Activated B cell treated with CpG ODN at 0.5 μM for 24 hours (primary cell): ENCODE measurements at regions of chr15 and their contacts with region 1.

Region 1: DNA sequence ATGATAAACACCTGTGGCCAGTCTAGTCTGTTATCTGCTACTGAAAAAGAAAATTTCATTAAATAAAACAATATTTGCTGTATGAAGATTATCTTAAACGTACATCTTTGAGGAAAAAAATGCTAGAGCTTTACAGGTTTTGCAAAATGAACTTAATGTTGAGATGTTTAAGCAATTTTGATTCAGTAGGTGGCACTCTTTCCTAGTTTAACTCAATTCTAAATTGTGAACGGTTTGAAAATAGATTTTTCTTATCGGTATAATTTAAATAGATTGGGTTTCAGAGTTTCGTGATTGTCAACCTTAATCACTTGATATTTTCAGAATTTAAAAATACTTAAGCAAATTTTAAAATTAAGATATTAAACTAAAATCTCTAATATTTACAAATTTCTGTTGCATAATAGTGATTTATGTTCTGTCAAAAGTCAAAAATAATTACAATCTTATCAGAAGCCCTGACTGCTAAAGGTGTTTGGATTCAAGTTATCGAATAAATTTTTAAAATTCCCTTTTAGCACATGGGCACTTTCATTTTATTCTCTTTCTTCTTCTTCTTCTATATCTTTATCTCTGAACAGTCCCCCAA is 7.0 kb upstream of the RNF111 start:
- DNase-seq: no peak
- ATAC-seq: no peak
- H3K4me3 Mint-ChIP-seq: peak overlapping the region; percentile 73
- H3K27ac Mint-ChIP-seq: peak overlapping the region; percentile 96
- H3K4me1 Mint-ChIP-seq: peaks cover 62% of the 10 kb centered on the region
- H3K27me3 Mint-ChIP-seq: no peaks in the 10 kb centered on the region
- CTCF ChIP-seq: no peak

Region 2: GRCh38 chr15:58770857-58771620 is 209.4 kb before region 1 on chr15 and contains the start of gene MINDY2:
- CTCF ChIA-PET with region 1: no interaction called
- POLR2A ChIA-PET with region 1: no interaction called
- intact Hi-C with region 1: loop called (anchors 2 kb)
- DNase-seq: peak; percentile 89
- ATAC-seq: peak; percentile 94
- H3K4me3 Mint-ChIP-seq: peak within 1 kb of the TSS; percentile 93
- H3K27ac Mint-ChIP-seq: peak within 1 kb of the TSS; percentile 96
- H3K4me1 Mint-ChIP-seq: peaks cover 6% of the 10 kb centered on the region
- H3K27me3 Mint-ChIP-seq: no peaks in the 10 kb centered on the region
- CTCF ChIP-seq: no peak
- total RNA-seq, gene MINDY2: 5.8 and 6.2 TPM in 2 replicates

Region 3: GRCh38 chr15:58957101-58957973 is 23.1 kb before region 1 on chr15:
- CTCF ChIA-PET with region 1: interaction called, 15 read pairs
- POLR2A ChIA-PET with region 1: no interaction called
- intact Hi-C with region 1: loop called (anchors 1 kb)
- DNase-seq: peak; percentile 17
- ATAC-seq: peak; percentile 97
- H3K4me3 Mint-ChIP-seq: no peak overlapping the region
- H3K27ac Mint-ChIP-seq: peak overlapping the region; percentile 38
- H3K4me1 Mint-ChIP-seq: peaks cover 5% of the 10 kb centered on the region
- H3K27me3 Mint-ChIP-seq: no peaks in the 10 kb centered on the region
- CTCF ChIP-seq: no peak

Region 4: GRCh38 chr15:59020322-59020721 is 39.9 kb after region 1 on chr15:
- CTCF ChIA-PET with region 1: no interaction called
- POLR2A ChIA-PET with region 1: no interaction called
- intact Hi-C with region 1: no loop called
- DNase-seq: no peak
- ATAC-seq: no peak
- H3K4me3 Mint-ChIP-seq: no peak overlapping the region
- H3K27ac Mint-ChIP-seq: no peak overlapping the region
- H3K4me1 Mint-ChIP-seq: peaks cover 15% of the 10 kb centered on the region
- H3K27me3 Mint-ChIP-seq: no peaks in the 10 kb centered on the region
- CTCF ChIP-seq: no peak

Region 5: DNA sequence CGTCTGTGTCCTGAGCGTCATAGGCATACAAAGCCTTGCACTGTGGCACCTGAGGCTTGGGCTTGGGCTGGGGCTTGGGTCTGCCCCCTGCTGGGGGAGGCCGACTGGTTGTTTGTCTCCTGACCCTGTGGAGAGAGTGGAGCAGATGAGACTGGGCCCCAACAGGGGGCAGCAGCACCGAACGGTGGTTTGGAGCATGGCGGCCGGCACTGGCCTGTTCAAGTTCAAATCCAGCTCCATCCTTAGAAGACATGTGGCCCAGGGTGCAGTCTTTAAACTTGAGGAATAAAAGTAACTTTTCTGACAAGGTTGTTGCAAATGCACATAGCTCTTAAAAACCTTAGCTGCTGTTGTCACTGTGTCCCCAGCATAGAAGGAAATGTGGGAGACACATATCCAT is 157.8 kb after region 1 on chr15:
- CTCF ChIA-PET with region 1: interaction called, 13 read pairs
- POLR2A ChIA-PET with region 1: interaction called, 8 read pairs
- intact Hi-C with region 1: loop called (anchors 1 kb)
- DNase-seq: peak; percentile 51
- ATAC-seq: peak; percentile 96
- H3K4me3 Mint-ChIP-seq: no peak overlapping the region
- H3K27ac Mint-ChIP-seq: peak overlapping the region; percentile 13
- H3K4me1 Mint-ChIP-seq: peaks cover 10% of the 10 kb centered on the region
- H3K27me3 Mint-ChIP-seq: no peaks in the 10 kb centered on the region
- CTCF ChIP-seq: no peak

Region 6: DNA sequence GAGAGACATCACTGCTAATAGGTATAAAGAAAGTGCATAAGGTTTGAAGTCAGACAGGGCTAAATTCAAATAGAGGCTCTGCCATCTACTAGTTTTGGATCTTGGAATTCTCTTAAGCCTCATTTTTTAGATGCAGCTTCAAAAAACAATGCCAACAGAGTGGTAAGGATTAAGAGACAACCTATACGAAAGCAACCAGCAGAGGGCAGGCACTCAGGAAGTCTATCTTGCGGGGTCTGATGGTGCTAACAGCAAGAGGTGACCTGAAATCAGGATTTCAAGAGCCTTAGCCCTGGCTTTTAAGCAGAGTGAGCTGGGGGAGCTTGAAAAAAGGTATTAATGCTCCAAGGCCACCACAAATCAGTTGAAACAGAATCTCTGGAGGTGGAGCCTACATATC is 266.9 kb after region 1 on chr15:
- CTCF ChIA-PET with region 1: no interaction called
- POLR2A ChIA-PET with region 1: no interaction called
- intact Hi-C with region 1: loop called (anchors 5 kb)
- DNase-seq: no peak
- ATAC-seq: peak; percentile 52
- H3K4me3 Mint-ChIP-seq: no peak overlapping the region
- H3K27ac Mint-ChIP-seq: peak overlapping the region; percentile 24
- H3K4me1 Mint-ChIP-seq: peaks cover 71% of the 10 kb centered on the region
- H3K27me3 Mint-ChIP-seq: no peaks in the 10 kb centered on the region
- CTCF ChIP-seq: no peak

Region 7: DNA sequence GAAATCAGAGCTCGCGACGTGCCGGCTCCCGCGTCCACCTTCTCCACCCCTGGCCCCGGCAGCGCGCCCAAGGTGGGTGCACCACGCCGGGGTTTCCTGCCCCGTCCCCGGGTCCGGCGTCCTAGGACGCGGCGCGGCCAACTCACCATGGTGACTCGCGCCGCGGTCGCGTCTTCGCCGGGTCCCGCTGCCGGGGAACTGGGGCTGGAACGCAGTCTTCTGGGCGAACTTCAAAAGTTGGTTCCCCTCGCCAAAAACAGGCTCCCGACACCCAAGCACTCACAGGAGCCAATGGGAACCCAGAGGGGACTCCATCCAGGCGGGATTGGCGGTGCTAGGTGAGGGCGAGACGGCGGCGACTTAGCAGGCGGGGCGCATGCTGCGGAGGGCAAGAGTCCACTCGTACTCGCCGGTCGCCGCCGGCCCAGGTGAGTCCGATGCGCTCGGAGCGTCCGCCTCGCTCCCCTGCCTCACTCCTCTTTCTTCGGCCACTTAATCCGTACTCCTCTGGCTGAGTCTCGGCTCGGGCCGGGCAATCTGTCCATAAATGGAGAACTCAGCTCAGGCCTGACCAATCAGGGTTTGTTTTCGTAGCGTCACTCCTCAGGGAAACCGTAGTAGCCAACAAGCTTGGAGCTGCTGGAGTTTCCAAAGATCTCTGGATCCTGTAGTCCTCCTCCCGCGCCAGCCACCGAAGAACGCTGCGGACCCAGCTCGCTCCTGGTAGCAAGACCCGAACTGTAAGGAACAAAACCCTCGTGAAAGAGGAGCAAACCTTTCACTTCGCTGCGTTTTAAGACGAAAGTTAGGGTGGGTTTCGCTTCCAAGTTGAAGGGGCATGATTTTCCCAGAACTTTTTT is 392.1 kb after region 1 on chr15 and contains the start of gene MYO1E:
- CTCF ChIA-PET with region 1: no interaction called
- POLR2A ChIA-PET with region 1: no interaction called
- intact Hi-C with region 1: loop called (anchors 5 kb)
- DNase-seq: peak; percentile 54
- ATAC-seq: peak; percentile 62
- H3K4me3 Mint-ChIP-seq: peak within 1 kb of the TSS; percentile 96
- H3K27ac Mint-ChIP-seq: peak within 1 kb of the TSS; percentile 89
- H3K4me1 Mint-ChIP-seq: peaks cover 64% of the 10 kb centered on the region
- H3K27me3 Mint-ChIP-seq: no peaks in the 10 kb centered on the region
- CTCF ChIP-seq: no peak
- total RNA-seq, gene MYO1E: 185 and 186 TPM in 2 replicates

Region 8: GRCh38 chr15:59501597-59501996 is 521.2 kb after region 1 on chr15:
- CTCF ChIA-PET with region 1: interaction called, 7 read pairs
- POLR2A ChIA-PET with region 1: interaction called, 4 read pairs
- intact Hi-C with region 1: loop called (anchors 2 kb)
- DNase-seq: no peak
- ATAC-seq: peak; percentile 67
- H3K4me3 Mint-ChIP-seq: no peak overlapping the region
- H3K27ac Mint-ChIP-seq: no peak overlapping the region
- H3K4me1 Mint-ChIP-seq: no peaks in the 10 kb centered on the region
- H3K27me3 Mint-ChIP-seq: no peaks in the 10 kb centered on the region
- CTCF ChIP-seq: peak; percentile 24